ENCODE measurements at regions of chr1 and their contacts with region 1.

Region 1: GRCh38 chr1:33633019-33633801 is 160.8 kb downstream of the ZSCAN20 start:
- DNase-seq: peak; percentile 90
- ATAC-seq: peak; percentile 94
- H3K4me3 Mint-ChIP-seq: no peak overlapping the region
- H3K27ac Mint-ChIP-seq: no peak overlapping the region
- H3K4me1 Mint-ChIP-seq: no peaks in the 10 kb centered on the region
- H3K27me3 Mint-ChIP-seq: peaks cover 29% of the 10 kb centered on the region

Region 2: DNA sequence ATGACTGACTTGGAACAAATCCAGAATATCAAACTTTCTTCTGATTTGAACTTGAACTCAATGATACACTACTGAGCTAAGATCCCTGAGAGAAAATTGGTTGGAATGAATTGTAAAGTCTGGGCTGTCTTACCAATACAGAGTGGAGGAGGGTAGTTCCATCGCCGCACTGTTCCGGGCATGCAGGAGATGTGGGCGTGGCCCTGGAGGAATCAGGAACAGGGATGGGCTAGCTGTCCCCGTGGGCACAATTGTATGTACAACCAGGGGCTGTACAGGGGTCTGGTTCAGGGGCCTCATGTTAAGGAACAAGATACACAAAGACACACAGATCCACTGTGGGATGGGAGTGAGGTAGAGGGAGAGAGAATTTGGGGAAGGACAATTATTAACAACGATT is 16.4 kb before region 1 on chr1:
- CTCF ChIA-PET with region 1: interaction called, 10 read pairs
- DNase-seq: no peak
- ATAC-seq: no peak
- H3K4me3 Mint-ChIP-seq: no peak overlapping the region
- H3K27ac Mint-ChIP-seq: no peak overlapping the region
- H3K4me1 Mint-ChIP-seq: peaks cover 3% of the 10 kb centered on the region
- H3K27me3 Mint-ChIP-seq: peaks cover 35% of the 10 kb centered on the region

Region 3: GRCh38 chr1:33660244-33660643 is 27.0 kb after region 1 on chr1:
- CTCF ChIA-PET with region 1: interaction called, 11 read pairs
- DNase-seq: no peak
- ATAC-seq: no peak
- H3K4me3 Mint-ChIP-seq: no peak overlapping the region
- H3K27ac Mint-ChIP-seq: no peak overlapping the region
- H3K4me1 Mint-ChIP-seq: no peaks in the 10 kb centered on the region
- H3K27me3 Mint-ChIP-seq: peaks cover 2% of the 10 kb centered on the region

Region 4: DNA sequence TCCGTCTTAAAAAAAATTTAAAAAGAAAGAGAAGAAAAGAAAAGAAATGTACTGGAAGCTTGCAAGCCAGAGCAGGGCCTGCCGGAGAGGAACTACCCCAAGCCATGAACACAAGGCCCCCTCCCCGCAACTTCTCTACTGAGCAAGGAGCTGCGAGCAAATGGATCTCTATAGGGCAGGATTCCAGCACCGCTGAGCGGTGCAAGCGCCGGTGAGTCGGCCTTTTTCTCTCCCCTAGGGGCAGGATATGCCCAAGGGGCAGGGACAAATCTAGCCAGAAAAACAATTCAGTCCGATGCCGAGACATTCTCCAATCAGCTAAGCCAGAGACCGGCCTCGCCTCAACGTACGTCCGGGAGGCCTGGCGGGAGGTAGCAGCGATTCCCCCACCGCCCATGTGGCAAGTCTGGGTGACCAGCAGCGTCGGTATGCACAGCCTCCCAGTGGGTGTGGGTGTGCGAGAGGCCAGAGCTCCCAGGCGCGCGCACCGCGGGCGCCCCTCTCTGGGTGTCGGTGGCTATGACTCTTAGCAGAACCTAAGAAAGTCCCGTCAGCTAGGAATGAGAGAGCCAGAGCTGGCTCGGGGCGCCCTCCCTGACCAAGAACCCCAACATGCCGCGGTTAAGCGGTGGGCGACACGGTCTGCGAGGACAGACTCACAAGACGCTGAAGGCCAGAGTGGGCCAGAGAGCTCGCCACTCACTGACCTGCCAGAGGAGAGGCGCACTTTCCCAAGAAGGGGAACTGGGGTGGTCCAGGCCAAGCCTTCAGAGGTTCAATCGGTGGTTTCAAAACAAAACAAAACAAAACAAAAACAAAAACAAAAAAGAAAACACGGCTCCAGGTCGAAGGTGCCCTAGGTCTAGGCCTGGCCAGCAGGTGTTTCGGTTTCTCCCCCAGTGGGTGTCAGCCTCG is 529.9 kb after region 1 on chr1:
- CTCF ChIA-PET with region 1: interaction called, 12 read pairs
- DNase-seq: peak; percentile 51
- ATAC-seq: peak; percentile 53
- H3K4me3 Mint-ChIP-seq: peak overlapping the region; percentile 56
- H3K27ac Mint-ChIP-seq: peak overlapping the region; percentile 36
- H3K4me1 Mint-ChIP-seq: peaks cover 7% of the 10 kb centered on the region
- H3K27me3 Mint-ChIP-seq: peaks cover 79% of the 10 kb centered on the region

Region 5: GRCh38 chr1:34597877-34598514 is 964.8 kb after region 1 on chr1:
- CTCF ChIA-PET with region 1: interaction called, 11 read pairs
- DNase-seq: peak; percentile 70
- ATAC-seq: peak; percentile 36
- H3K4me3 Mint-ChIP-seq: no peak overlapping the region
- H3K27ac Mint-ChIP-seq: no peak overlapping the region
- H3K4me1 Mint-ChIP-seq: no peaks in the 10 kb centered on the region
- H3K27me3 Mint-ChIP-seq: peaks cover 12% of the 10 kb centered on the region

Region 6: GRCh38 chr1:34742667-34743270 is 1109.6 kb after region 1 on chr1:
- CTCF ChIA-PET with region 1: interaction called, 18 read pairs
- DNase-seq: peak; percentile 81
- ATAC-seq: peak; percentile 95
- H3K4me3 Mint-ChIP-seq: no peak overlapping the region
- H3K27ac Mint-ChIP-seq: no peak overlapping the region
- H3K4me1 Mint-ChIP-seq: no peaks in the 10 kb centered on the region
- H3K27me3 Mint-ChIP-seq: peaks cover 5% of the 10 kb centered on the region

Measured in activated CD8-positive, alpha-beta memory T cell treated with anti-CD3 and anti-CD28 coated beads, Interleukin-2, amount 10 ng/mL, durations not matched to agents 7 days and 5 days (primary cell).